IMR-90 (cell line): ENCODE measurements at regions of chr2 and their contacts with region 1.

Region 1: DNA sequence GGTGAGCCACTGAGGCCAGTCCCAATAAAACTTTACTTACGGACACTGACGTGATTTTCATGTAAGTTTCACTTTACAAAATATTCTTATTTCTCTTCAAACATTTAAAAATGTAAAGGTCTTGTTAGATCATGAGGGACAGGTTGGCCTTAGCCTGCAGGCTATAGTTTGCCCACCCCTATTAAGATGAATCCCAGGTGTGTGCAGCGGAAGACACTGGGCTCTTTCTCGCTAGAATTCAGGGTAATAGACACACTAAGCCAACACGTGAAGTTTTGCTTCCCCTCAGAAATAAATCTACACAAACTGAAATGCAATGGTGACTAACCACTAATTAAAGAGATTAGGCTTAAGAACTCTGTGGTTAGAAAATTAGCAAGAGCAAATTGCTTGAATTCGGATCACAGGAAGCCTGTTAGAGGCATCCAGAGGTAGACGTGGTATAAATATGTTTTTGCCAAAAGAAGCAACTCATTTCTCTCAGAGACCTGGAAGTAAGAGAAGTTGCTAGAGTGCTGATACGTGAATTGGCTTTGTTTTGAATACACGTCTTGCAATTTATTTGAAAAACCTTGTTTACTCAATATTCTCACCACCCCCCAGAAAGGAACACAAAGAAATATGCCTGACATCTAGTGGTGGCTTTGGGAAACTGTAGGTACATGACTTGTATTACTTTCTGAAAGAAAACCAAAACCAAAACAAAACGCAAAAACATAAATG is 151.6 kb downstream of the DTNB start:
- DNase-seq: peak; percentile 81
- ATAC-seq: peak; percentile 93
- H3K4me3 ChIP-seq: peak overlapping the region; percentile 51; the same call in 1 of the 2 replicates
- H3K27ac ChIP-seq: no peak overlapping the region
- H3K4me1 ChIP-seq: no peaks in the 10 kb centered on the region
- H3K27me3 ChIP-seq: no peaks in the 10 kb centered on the region
- CTCF ChIP-seq: peak; percentile 82
- POLR2A ChIP-seq: no peak
- RAD21 ChIP-seq: peak; percentile 74

Region 2: DNA sequence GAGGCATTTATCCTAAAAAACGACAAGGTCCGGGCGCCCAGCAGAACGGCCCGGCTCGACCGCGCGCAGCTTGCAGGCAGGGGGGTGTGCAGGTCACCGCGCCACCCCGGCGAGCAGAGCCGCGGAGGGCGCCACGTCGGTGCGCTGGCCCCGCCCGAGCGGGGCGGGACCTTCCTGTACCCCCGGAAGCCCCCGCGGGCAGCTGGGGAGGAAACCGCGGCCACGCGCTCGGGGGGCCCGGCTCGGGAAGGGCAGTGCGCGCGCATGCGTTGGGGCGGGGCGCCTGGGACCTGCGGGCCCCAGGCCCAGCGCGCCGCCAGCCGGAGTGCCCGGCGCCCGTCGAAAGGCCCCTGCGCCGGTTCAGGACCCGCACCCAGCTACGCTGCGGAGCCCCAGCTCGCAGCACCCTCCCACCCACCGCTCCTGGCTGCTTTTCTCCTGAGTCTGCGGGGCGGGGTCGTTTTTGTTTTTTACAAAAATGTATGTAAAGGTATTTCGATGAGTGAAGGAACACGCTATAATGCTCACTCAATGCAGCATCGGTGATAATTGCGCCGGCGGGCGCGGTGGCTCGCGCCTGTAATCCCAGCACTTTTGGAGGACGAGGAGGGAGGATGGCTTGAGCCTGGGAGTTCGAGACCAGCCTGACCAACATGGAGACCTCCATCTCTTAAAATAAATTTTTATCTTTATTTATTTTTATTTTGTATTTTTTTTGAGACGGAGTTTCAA is 305.7 kb before region 1 on chr2:
- CTCF ChIA-PET with region 1: no interaction called
- POLR2A ChIA-PET with region 1: no interaction called
- dilution Hi-C with region 1: no loop called
- in situ Hi-C with region 1: no loop called
- intact Hi-C with region 1: no loop called
- DNase-seq: no peak
- ATAC-seq: peak; percentile 58
- H3K4me3 ChIP-seq: peak overlapping the region; percentile 27
- H3K27ac ChIP-seq: no peak overlapping the region
- H3K4me1 ChIP-seq: no peaks in the 10 kb centered on the region
- H3K27me3 ChIP-seq: peaks cover 5% of the 10 kb centered on the region; the same call in 1 of the 2 replicates
- CTCF ChIP-seq: no peak
- POLR2A ChIP-seq: no peak
- RAD21 ChIP-seq: no peak

Region 3: DNA sequence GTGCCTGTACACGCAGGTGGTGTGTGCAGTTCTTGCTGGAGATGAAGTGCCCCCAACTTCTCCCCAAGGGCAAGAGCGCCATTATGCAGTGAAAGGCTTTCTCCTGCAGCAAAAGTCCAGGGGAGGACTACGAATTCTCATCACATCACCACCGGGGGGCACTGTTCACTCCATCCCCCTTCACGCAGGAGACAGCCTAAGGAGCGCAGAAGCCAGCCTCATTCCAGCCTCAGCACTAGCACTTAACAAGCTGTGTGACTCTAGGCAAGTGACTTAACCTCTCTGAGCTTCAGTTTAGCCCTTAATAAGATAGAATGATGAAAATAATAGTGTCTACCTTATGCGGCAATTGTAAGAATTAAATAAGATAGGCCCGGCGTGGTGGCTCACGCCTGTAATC is 212.4 kb before region 1 on chr2:
- CTCF ChIA-PET with region 1: no interaction called
- POLR2A ChIA-PET with region 1: no interaction called
- dilution Hi-C with region 1: no loop called
- in situ Hi-C with region 1: no loop called
- intact Hi-C with region 1: loop called (anchors 1 kb)
- DNase-seq: peak; percentile 50
- ATAC-seq: peak; percentile 68
- H3K4me3 ChIP-seq: no peak overlapping the region
- H3K27ac ChIP-seq: no peak overlapping the region
- H3K4me1 ChIP-seq: peaks cover 1% of the 10 kb centered on the region; the same call in 1 of the 2 replicates
- H3K27me3 ChIP-seq: no peaks in the 10 kb centered on the region
- CTCF ChIP-seq: peak; percentile 51
- POLR2A ChIP-seq: no peak
- RAD21 ChIP-seq: peak; percentile 63

Region 4: DNA sequence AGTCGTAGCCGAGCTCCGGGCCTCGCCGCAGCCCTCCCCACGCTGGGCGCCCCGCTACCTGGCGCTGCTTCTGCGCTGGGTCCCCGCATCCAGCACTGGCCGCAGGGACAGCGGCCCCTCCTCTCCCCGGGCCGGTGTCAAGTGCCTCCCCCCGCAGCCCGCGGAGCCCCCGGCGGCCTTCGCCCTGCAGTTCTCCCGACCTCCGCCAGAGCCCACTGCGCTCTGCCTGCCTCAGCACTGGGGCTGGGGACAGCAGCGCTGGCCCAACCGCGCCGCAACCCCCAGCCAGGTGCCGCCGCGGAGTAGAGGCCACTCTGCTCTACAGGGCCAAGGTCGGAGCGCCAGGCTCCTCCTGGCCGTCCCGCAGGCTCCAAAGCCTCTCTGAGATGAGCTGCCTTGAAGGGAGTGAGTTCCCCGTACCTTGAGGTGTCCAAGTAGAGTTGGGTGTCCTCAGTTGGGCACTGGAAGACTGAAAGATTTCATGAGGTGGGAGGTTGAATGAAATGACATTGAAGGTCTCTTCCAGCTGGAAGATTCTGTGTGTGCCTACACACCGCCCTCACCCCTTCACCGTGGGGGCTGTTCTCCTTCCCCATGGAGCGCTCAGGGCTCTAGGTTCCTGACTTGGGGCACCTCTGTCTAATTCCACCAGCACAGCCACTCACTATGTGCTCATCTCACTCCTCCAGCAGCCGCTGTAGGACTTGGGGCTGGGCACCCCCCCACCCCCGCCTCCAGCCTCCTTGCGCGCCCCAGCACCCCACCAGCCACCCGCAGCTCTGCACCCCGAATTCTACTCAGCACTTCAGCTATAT is 179.2 kb before region 1 on chr2:
- CTCF ChIA-PET with region 1: no interaction called
- POLR2A ChIA-PET with region 1: no interaction called
- dilution Hi-C with region 1: no loop called
- in situ Hi-C with region 1: no loop called
- intact Hi-C with region 1: loop called (anchors 1 kb)
- DNase-seq: peak; percentile 82
- ATAC-seq: peak; percentile 87
- H3K4me3 ChIP-seq: peak overlapping the region; percentile 60
- H3K27ac ChIP-seq: no peak overlapping the region; the same call in 1 of the 2 replicates
- H3K4me1 ChIP-seq: peaks cover 12% of the 10 kb centered on the region; the same call in 1 of the 2 replicates
- H3K27me3 ChIP-seq: no peaks in the 10 kb centered on the region
- CTCF ChIP-seq: peak; percentile 97
- POLR2A ChIP-seq: no peak
- RAD21 ChIP-seq: peak; percentile 72

Region 5: DNA sequence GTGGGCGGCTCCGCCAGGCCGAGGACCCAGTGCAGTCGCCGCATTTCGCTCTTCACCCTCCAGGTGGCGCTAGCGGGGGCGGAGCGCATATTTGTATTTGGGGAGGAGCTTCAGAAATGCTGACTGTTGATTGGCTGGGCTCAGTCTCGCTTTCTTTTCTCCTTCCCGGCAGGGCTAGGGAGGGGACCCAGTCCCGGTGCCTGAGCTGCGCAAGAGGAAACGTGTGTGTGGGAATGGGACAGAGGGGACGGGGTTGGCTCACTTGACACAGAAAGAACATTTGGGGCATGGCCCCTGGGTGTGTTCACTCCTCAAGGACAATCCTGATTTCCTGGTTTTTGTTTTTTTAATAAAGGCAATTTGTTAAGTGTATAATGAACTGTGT is 159.8 kb before region 1 on chr2:
- CTCF ChIA-PET with region 1: no interaction called
- POLR2A ChIA-PET with region 1: no interaction called
- dilution Hi-C with region 1: no loop called
- in situ Hi-C with region 1: no loop called
- intact Hi-C with region 1: loop called (anchors 1 kb)
- DNase-seq: peak; percentile 88
- ATAC-seq: peak; percentile 99
- H3K4me3 ChIP-seq: peak overlapping the region; percentile 32
- H3K27ac ChIP-seq: no peak overlapping the region
- H3K4me1 ChIP-seq: no peaks in the 10 kb centered on the region
- H3K27me3 ChIP-seq: no peaks in the 10 kb centered on the region; the same call in 1 of the 2 replicates
- CTCF ChIP-seq: peak; percentile 93
- POLR2A ChIP-seq: no peak; the same call in 1 of the 2 replicates
- RAD21 ChIP-seq: peak; percentile 48

Region 6: DNA sequence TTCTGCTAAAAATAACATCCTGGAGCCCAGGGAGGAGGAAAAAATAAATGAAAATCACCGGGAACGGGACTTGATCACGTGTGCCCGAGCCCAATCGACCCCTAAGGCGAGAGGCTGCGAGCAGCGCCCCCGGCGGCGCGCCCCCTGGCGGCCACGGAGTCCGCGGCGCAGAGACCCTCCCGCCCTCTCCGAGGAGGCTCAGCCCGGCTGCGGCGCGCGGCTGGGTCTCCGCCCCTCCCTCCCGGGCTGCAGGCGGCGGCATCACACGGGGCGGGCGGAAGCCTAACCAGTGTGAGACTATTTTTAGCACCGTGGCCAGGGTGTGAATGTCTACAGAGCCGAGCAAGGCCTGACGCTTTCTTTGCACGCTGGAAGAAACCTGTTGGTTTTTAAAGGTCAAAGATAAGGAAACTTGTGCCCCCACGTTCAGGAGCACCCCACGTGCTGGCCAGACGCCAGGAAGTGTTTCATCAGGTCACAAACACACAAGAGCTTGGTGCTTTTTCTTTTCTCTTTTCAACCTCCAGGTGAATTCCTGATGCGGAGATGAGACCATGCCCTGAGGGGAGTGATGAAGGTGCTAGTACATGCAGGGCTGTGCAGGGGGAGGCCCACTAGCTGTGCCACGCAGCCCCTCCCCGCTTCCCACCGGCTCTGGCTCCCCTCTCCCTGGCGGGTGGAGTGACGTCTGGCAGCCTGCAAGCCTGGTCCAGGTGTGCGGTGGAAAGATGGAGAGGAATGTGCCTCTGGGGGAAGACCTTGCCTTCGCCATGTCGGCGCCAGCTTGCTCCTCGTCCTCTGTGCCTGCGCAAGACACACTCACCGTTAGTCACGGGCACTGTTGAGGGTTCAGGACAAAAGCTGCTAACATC is 144.8 kb before region 1 on chr2:
- CTCF ChIA-PET with region 1: interaction called, 4 read pairs
- POLR2A ChIA-PET with region 1: no interaction called
- dilution Hi-C with region 1: no loop called
- in situ Hi-C with region 1: no loop called
- intact Hi-C with region 1: loop called (anchors 2 kb)
- DNase-seq: peak; percentile 79
- ATAC-seq: peak; percentile 100
- H3K4me3 ChIP-seq: peak overlapping the region; percentile 18; the same call in 1 of the 2 replicates
- H3K27ac ChIP-seq: no peak overlapping the region
- H3K4me1 ChIP-seq: peaks cover 8% of the 10 kb centered on the region
- H3K27me3 ChIP-seq: no peaks in the 10 kb centered on the region
- CTCF ChIP-seq: peak; percentile 96
- POLR2A ChIP-seq: 0 out of 2 replicates have a peak, but pooled peaks have one; percentile 38
- RAD21 ChIP-seq: peak; percentile 68

Region 7: GRCh38 chr2:25558262-25558661 is 36.4 kb after region 1 on chr2:
- CTCF ChIA-PET with region 1: interaction called, 10 read pairs
- POLR2A ChIA-PET with region 1: no interaction called
- dilution Hi-C with region 1: no loop called
- in situ Hi-C with region 1: no loop called
- intact Hi-C with region 1: no loop called
- DNase-seq: peak; percentile 85
- ATAC-seq: peak; percentile 44; the same call in 1 of the 2 replicates
- H3K4me3 ChIP-seq: no peak overlapping the region
- H3K27ac ChIP-seq: no peak overlapping the region
- H3K4me1 ChIP-seq: peaks cover 2% of the 10 kb centered on the region
- H3K27me3 ChIP-seq: no peaks in the 10 kb centered on the region
- CTCF ChIP-seq: no peak
- POLR2A ChIP-seq: no peak
- RAD21 ChIP-seq: no peak

Region 8: GRCh38 chr2:27322766-27323595 is 1801.2 kb after region 1 on chr2 and contains the start of gene MPV17:
- CTCF ChIA-PET with region 1: no interaction called
- POLR2A ChIA-PET with region 1: no interaction called
- dilution Hi-C with region 1: no loop called
- in situ Hi-C with region 1: no loop called
- intact Hi-C with region 1: no loop called
- DNase-seq: peak; percentile 91
- ATAC-seq: peak; percentile 80
- H3K4me3 ChIP-seq: peak within 1 kb of the TSS; percentile 63
- H3K27ac ChIP-seq: peak within 1 kb of the TSS; percentile 97
- H3K4me1 ChIP-seq: peaks cover 7% of the 10 kb centered on the region
- H3K27me3 ChIP-seq: no peaks in the 10 kb centered on the region
- CTCF ChIP-seq: no peak
- POLR2A ChIP-seq: peak; percentile 92
- RAD21 ChIP-seq: no peak
- total RNA-seq, gene MPV17: 70.4 and 80.5 TPM in 2 replicates